Caco-2 (cell line): ENCODE measurements at regions of chr10 and their contacts with region 1.

Region 1: DNA sequence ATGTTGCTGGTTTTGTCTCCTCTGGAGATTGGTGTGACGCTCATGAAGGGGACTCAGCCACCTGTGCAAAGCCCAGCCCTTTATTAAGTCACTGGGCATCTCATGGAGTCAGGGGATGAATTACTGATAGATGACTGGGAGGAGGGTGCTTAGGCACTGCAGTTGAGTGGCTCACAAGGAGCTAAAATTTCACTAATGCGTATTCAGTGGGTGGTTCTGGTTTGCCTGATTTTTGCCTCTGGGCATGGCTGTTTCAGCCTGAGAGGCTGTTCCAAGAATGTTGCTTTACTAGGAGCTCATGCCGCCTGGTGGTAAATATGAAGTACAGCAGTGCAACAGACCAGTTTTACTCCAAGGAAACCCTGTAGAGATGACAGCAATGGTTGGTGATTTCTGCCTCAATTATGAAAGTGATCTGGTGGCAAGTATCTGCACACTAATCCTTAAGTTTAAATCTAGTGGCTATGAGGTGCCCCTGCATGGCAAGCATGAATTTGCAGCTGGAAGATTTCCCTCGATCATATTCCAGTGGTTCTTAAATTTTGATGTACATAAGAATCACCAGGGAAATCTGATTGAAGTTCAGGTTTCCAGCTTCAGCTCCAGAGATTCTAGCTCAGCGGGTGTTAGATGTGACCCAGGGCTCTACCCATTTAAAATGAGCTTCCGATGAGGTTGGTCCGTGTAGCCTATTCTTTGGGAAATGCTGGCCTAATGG is 19.9 kb downstream of the ACTA2 start:
- DNase-seq: peak; percentile 69 to 70
- H3K4me3 ChIP-seq: no peak overlapping the region
- H3K4me3 Mint-ChIP-seq: no peak overlapping the region
- H3K27ac Mint-ChIP-seq: no peak overlapping the region
- H3K4me1 ChIP-seq: peaks cover 5% of the 10 kb centered on the region; the same call in 1 of the 2 replicates
- H3K4me1 Mint-ChIP-seq: no peaks in the 10 kb centered on the region
- H3K27me3 ChIP-seq: no peaks in the 10 kb centered on the region
- H3K27me3 Mint-ChIP-seq: peaks cover 2% of the 10 kb centered on the region
- CTCF ChIP-seq: peak; percentile 75 to 87

Region 2: GRCh38 chr10:88565072-88565471 is 367.6 kb before region 1 on chr10:
- CTCF ChIA-PET with region 1: interaction called, 6 read pairs
- POLR2A ChIA-PET with region 1: no interaction called
- intact Hi-C with region 1: loop called (anchors 1 kb)
- DNase-seq: no peak
- H3K4me3 ChIP-seq: no peak overlapping the region
- H3K4me3 Mint-ChIP-seq: no peak overlapping the region
- H3K27ac Mint-ChIP-seq: no peak overlapping the region
- H3K4me1 ChIP-seq: no peaks in the 10 kb centered on the region
- H3K4me1 Mint-ChIP-seq: no peaks in the 10 kb centered on the region
- H3K27me3 ChIP-seq: no peaks in the 10 kb centered on the region
- H3K27me3 Mint-ChIP-seq: no peaks in the 10 kb centered on the region
- CTCF ChIP-seq: peak; percentile 36 to 37

Region 3: GRCh38 chr10:88880282-88881076 is 52.2 kb before region 1 on chr10:
- CTCF ChIA-PET with region 1: no interaction called
- POLR2A ChIA-PET with region 1: interaction called, 3 read pairs
- intact Hi-C with region 1: loop called (anchors 1 kb)
- DNase-seq: peak; percentile 68 to 70
- H3K4me3 ChIP-seq: peak overlapping the region; percentile 92
- H3K4me3 Mint-ChIP-seq: peak overlapping the region; percentile 90
- H3K27ac Mint-ChIP-seq: no peak overlapping the region
- H3K4me1 ChIP-seq: no peaks in the 10 kb centered on the region
- H3K4me1 Mint-ChIP-seq: no peaks in the 10 kb centered on the region
- H3K27me3 ChIP-seq: no peaks in the 10 kb centered on the region
- H3K27me3 Mint-ChIP-seq: peaks cover 15% of the 10 kb centered on the region
- CTCF ChIP-seq: peak in 1 of 2 experiments; percentile 14

Region 4: GRCh38 chr10:88986549-88987242 is 54.0 kb after region 1 on chr10:
- CTCF ChIA-PET with region 1: interaction called, 6 read pairs
- POLR2A ChIA-PET with region 1: no interaction called
- intact Hi-C with region 1: loop called (anchors 1 kb)
- DNase-seq: peak in 1 of 2 experiments; percentile 38
- H3K4me3 ChIP-seq: no peak overlapping the region
- H3K4me3 Mint-ChIP-seq: no peak overlapping the region
- H3K27ac Mint-ChIP-seq: no peak overlapping the region
- H3K4me1 ChIP-seq: peaks cover 5% of the 10 kb centered on the region; the same call in 1 of the 2 replicates
- H3K4me1 Mint-ChIP-seq: no peaks in the 10 kb centered on the region
- H3K27me3 ChIP-seq: peaks cover 2% of the 10 kb centered on the region
- H3K27me3 Mint-ChIP-seq: peaks cover 26% of the 10 kb centered on the region
- CTCF ChIP-seq: peak; percentile 43 to 72

Region 5: GRCh38 chr10:89086801-89087521 is 154.3 kb after region 1 on chr10:
- CTCF ChIA-PET with region 1: no interaction called
- POLR2A ChIA-PET with region 1: no interaction called
- intact Hi-C with region 1: no loop called
- DNase-seq: no peak
- H3K4me3 ChIP-seq: no peak overlapping the region
- H3K4me3 Mint-ChIP-seq: no peak overlapping the region
- H3K27ac Mint-ChIP-seq: no peak overlapping the region
- H3K4me1 ChIP-seq: no peaks in the 10 kb centered on the region
- H3K4me1 Mint-ChIP-seq: no peaks in the 10 kb centered on the region
- H3K27me3 ChIP-seq: no peaks in the 10 kb centered on the region; the same call in 1 of the 2 replicates
- H3K27me3 Mint-ChIP-seq: no peaks in the 10 kb centered on the region
- CTCF ChIP-seq: no peak

Region 6: GRCh38 chr10:89163265-89163995 is 230.7 kb after region 1 on chr10:
- CTCF ChIA-PET with region 1: no interaction called
- POLR2A ChIA-PET with region 1: no interaction called
- intact Hi-C with region 1: no loop called
- DNase-seq: no peak
- H3K4me3 ChIP-seq: no peak overlapping the region
- H3K4me3 Mint-ChIP-seq: no peak overlapping the region
- H3K27ac Mint-ChIP-seq: no peak overlapping the region
- H3K4me1 ChIP-seq: no peaks in the 10 kb centered on the region
- H3K4me1 Mint-ChIP-seq: no peaks in the 10 kb centered on the region
- H3K27me3 ChIP-seq: no peaks in the 10 kb centered on the region
- H3K27me3 Mint-ChIP-seq: peaks cover 11% of the 10 kb centered on the region
- CTCF ChIP-seq: no peak

Region 7: GRCh38 chr10:89217057-89217990 is 284.6 kb after region 1 on chr10:
- CTCF ChIA-PET with region 1: no interaction called
- POLR2A ChIA-PET with region 1: no interaction called
- intact Hi-C with region 1: loop called (anchors 1 kb)
- DNase-seq: peak in 1 of 2 experiments; percentile 57
- H3K4me3 ChIP-seq: no peak overlapping the region
- H3K4me3 Mint-ChIP-seq: no peak overlapping the region
- H3K27ac Mint-ChIP-seq: no peak overlapping the region
- H3K4me1 ChIP-seq: 0 out of 2 replicates have a peak, but pooled peaks cover 4% of the 10 kb centered on the region
- H3K4me1 Mint-ChIP-seq: no peaks in the 10 kb centered on the region
- H3K27me3 ChIP-seq: no peaks in the 10 kb centered on the region
- H3K27me3 Mint-ChIP-seq: no peaks in the 10 kb centered on the region
- CTCF ChIP-seq: peak; percentile 63 to 64